Left colon (tissue), 2 donors: ENCODE measurements at regions of chrX and their contacts with region 1.

Region 1: GRCh38 chrX:17046478-17047097 is 100.1 kb downstream of the REPS2 start:
- DNase-seq: peak; percentile 44 to 71
- ATAC-seq: peak; percentile 89

Region 2: DNA sequence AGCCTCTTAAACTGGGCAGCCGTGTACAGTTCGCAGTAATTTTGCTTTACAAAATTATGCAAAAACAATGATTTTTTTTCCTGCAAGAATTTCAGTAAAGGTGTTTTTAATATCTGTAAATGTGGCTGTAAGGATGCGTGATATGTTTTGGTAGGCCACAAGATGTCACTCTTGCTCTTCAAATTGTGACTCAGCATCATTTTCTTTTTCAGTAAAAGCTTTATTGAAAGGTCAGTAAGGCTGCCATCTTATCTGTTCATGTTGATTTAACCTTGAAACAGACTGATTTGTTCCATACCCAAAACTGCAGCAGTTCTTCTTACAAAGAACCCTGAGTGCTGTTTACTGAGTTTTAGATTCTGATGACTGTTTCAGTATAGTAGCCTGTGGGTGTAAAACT is 220.4 kb before region 1 on chrX:
- intact Hi-C with region 1: loop called in 1 of 2 experiments (anchors 10 kb)
- DNase-seq: no peak
- ATAC-seq: peak; percentile 69